CD4-positive, alpha-beta T cell (primary cell): ENCODE measurements at regions of chrX and their contacts with region 1.

Region 1: GRCh38 chrX:73977534-73978169 is 326.3 kb upstream of the ZCCHC13 start:
- DNase-seq: peak in 6 of 14 experiments; percentile 1 to 85 (median 44)
- ATAC-seq: peak; percentile 88
- H3K4me3 ChIP-seq: no peak overlapping the region
- H3K4me3 Mint-ChIP-seq: peak overlapping the region; percentile 47
- H3K27ac ChIP-seq: peak overlapping the region; percentile 30 to 49
- H3K27ac Mint-ChIP-seq: peak overlapping the region; percentile 93
- H3K4me1 ChIP-seq: peaks cover 17% of the 10 kb centered on the region
- H3K4me1 Mint-ChIP-seq: peaks cover 60% of the 10 kb centered on the region
- H3K27me3 ChIP-seq: no peaks in the 10 kb centered on the region
- H3K27me3 Mint-ChIP-seq: no peaks in the 10 kb centered on the region
- CTCF ChIP-seq: no peak

Region 2: GRCh38 chrX:73943693-73944562 is 33.7 kb before region 1 on chrX:
- CTCF ChIA-PET with region 1: no interaction called
- POLR2A ChIA-PET with region 1: interaction called, 4 read pairs
- intact Hi-C with region 1: loop called (anchors 2 to 5 kb)
- DNase-seq: peak; percentile 70 to 91 (median 84)
- ATAC-seq: peak; percentile 99
- H3K4me3 ChIP-seq: peak overlapping the region; percentile 81
- H3K4me3 Mint-ChIP-seq: peak overlapping the region; percentile 88
- H3K27ac ChIP-seq: peak overlapping the region; percentile 64 to 78
- H3K27ac Mint-ChIP-seq: peak overlapping the region; percentile 96
- H3K4me1 ChIP-seq: peaks cover 10% of the 10 kb centered on the region
- H3K4me1 Mint-ChIP-seq: peaks cover 29% of the 10 kb centered on the region
- H3K27me3 ChIP-seq: no peaks in the 10 kb centered on the region
- H3K27me3 Mint-ChIP-seq: no peaks in the 10 kb centered on the region
- CTCF ChIP-seq: no peak

Region 3: DNA sequence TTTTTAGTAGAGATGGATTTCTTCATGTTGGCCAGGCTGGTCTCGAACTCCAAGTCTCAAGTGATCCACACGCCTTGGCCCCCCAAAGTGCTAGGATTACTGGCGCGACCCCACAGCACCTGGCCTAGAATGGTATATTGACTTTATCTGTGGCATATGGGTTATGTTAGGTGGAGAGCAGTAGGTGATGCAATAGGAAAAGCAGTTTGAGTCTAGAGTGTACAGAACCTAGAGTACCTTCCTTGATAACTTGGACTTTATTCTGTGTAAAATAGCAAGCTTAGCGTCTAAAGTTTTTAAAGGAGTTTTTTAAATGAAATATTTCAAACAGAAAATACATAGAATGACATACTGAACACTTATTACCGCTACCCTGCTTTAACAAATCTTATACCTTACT is 14.4 kb after region 1 on chrX:
- CTCF ChIA-PET with region 1: no interaction called
- POLR2A ChIA-PET with region 1: no interaction called
- intact Hi-C with region 1: no loop called
- DNase-seq: no peak
- ATAC-seq: no peak
- H3K4me3 ChIP-seq: no peak overlapping the region
- H3K4me3 Mint-ChIP-seq: no peak overlapping the region
- H3K27ac ChIP-seq: no peak overlapping the region
- H3K27ac Mint-ChIP-seq: no peak overlapping the region
- H3K4me1 ChIP-seq: no peaks in the 10 kb centered on the region
- H3K4me1 Mint-ChIP-seq: no peaks in the 10 kb centered on the region
- H3K27me3 ChIP-seq: no peaks in the 10 kb centered on the region
- H3K27me3 Mint-ChIP-seq: no peaks in the 10 kb centered on the region
- CTCF ChIP-seq: no peak